ENCODE measurements at regions of chr15 and their contacts with region 1.

Region 1: GRCh38 chr15:99282121-99282520 is 30.8 kb downstream of the LRRC28 start:
- DNase-seq: no peak
- ATAC-seq: no peak
- H3K4me3 ChIP-seq: no peak overlapping the region
- H3K27ac ChIP-seq: peak overlapping the region in 1 of 4 donors; percentile 34
- H3K4me1 ChIP-seq: peaks cover 11 to 18% of the 10 kb centered on the region in 2 donors
- H3K27me3 ChIP-seq: no peaks in the 10 kb centered on the region
- CTCF ChIP-seq: no peak
- POLR2A ChIP-seq: no peak

Region 2: DNA sequence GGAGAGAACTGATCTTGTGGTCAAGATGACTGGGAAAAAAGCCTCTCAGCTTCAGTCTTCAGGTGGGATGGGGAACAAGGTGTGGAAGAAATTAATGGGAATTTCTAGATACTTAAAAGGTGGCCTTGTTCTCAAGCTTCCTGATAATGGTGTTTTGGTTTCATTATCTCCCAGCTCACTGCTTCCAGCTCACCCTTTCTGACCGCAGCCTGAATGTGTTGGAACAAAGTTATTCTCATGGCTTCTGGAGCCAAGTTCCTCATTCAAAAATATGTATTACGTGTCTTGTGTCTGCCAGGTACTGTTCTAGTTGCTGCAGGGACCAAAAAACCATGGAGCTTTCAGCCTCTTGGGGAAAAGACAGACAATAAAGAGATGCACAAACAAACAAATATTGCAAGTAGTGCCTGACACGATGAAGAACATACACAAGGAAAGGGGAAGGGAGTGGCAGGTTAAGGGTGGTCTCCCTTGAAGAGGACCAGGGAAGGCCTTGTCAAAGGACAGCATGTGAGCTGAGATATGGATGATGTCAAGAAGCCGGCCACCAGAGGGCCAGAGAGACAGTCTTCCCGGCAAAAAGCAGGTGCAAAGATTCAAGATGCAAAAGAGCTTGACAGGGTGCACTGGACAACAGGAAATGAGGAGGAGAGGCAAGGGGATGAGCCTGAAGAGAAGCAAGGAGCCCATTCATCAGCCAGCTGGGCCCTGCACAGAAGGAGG is 1286.1 kb before region 1 on chr15:
- in situ Hi-C with region 1: no loop called
- intact Hi-C with region 1: no loop called
- DNase-seq: no peak
- ATAC-seq: no peak
- H3K4me3 ChIP-seq: no peak overlapping the region
- H3K27ac ChIP-seq: no peak overlapping the region
- H3K4me1 ChIP-seq: peaks cover 4 to 12% of the 10 kb centered on the region in 2 donors
- H3K27me3 ChIP-seq: no peaks in the 10 kb centered on the region
- CTCF ChIP-seq: peak in 1 of 5 experiments; percentile 13
- POLR2A ChIP-seq: no peak

Region 3: DNA sequence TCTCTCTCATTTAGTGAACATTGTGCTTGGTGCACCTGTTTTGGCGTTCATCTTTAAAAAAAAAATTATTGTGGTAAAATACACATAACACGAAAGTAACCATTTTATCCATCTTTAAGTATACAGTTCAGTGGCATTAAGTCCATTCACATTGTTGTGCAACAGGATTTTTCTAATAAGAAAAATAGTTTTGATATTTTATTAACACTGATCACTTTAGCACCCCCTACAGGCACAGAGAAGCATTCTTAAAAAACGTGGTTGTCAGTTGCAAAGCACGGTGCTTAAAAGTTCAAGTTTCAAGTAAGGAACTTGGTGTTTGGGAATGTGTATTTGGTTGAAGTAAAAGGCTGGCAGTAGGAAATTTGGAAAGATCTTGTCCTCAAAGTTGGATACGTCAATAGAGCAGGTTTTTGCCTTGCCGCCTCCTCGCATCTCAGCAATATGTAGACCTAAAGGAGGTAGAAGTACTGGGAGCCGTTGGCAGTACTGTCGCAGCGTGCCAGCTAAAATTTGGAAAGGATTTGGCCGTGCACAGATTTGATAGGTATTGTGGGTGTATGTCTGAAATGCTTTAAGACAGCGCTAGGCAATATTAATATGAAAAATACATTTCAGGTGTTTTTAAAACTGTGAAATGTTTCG is 79.5 kb after region 1 on chr15:
- in situ Hi-C with region 1: no loop called
- intact Hi-C with region 1: loop called (anchors 1 kb)
- DNase-seq: no peak
- ATAC-seq: no peak
- H3K4me3 ChIP-seq: no peak overlapping the region
- H3K27ac ChIP-seq: no peak overlapping the region
- H3K4me1 ChIP-seq: no peaks in the 10 kb centered on the region
- H3K27me3 ChIP-seq: no peaks in the 10 kb centered on the region
- CTCF ChIP-seq: peak; percentile 9 to 44 (median 16)
- POLR2A ChIP-seq: no peak

Region 4: GRCh38 chr15:99385865-99386264 is 103.7 kb after region 1 on chr15:
- in situ Hi-C with region 1: loop called in 1 of 4 experiments (anchors 25 kb)
- intact Hi-C with region 1: loop called (anchors 5 kb)
- DNase-seq: peak in 1 of 2 donors; percentile 57
- ATAC-seq: peak; percentile 68 to 75
- H3K4me3 ChIP-seq: no peak overlapping the region
- H3K27ac ChIP-seq: no peak overlapping the region
- H3K4me1 ChIP-seq: peaks cover 12 to 23% of the 10 kb centered on the region in 2 donors
- H3K27me3 ChIP-seq: no peaks in the 10 kb centered on the region
- CTCF ChIP-seq: no peak
- POLR2A ChIP-seq: no peak

Region 5: DNA sequence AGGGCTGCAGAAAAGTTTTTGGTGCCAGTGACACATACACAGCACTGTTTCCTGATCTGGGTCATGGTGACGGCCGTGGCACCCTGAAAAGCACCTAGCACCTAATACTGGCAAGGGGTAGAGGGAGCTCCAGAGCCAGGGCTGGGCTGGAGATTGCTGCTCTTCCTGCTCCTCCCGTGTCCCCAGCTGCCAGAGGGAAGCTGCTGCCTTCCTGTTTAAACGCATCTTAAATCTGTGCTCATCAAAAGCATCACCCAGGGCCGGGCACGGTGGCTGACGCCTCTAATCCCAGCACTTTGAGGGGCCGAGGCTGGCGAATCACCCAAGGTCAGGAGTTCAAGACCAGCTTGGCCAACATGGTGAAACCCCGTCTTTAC is 127.0 kb after region 1 on chr15:
- in situ Hi-C with region 1: no loop called
- intact Hi-C with region 1: loop called (anchors 10 kb)
- DNase-seq: peak; percentile 54 to 67
- ATAC-seq: peak; percentile 74 to 91
- H3K4me3 ChIP-seq: no peak overlapping the region
- H3K27ac ChIP-seq: peak overlapping the region in 3 of 4 donors; percentile 4 to 37 (median 32)
- H3K4me1 ChIP-seq: peaks cover 13 to 15% of the 10 kb centered on the region in 2 donors
- H3K27me3 ChIP-seq: no peaks in the 10 kb centered on the region
- CTCF ChIP-seq: peak; percentile 36 to 76 (median 60)
- POLR2A ChIP-seq: no peak

Region 6: DNA sequence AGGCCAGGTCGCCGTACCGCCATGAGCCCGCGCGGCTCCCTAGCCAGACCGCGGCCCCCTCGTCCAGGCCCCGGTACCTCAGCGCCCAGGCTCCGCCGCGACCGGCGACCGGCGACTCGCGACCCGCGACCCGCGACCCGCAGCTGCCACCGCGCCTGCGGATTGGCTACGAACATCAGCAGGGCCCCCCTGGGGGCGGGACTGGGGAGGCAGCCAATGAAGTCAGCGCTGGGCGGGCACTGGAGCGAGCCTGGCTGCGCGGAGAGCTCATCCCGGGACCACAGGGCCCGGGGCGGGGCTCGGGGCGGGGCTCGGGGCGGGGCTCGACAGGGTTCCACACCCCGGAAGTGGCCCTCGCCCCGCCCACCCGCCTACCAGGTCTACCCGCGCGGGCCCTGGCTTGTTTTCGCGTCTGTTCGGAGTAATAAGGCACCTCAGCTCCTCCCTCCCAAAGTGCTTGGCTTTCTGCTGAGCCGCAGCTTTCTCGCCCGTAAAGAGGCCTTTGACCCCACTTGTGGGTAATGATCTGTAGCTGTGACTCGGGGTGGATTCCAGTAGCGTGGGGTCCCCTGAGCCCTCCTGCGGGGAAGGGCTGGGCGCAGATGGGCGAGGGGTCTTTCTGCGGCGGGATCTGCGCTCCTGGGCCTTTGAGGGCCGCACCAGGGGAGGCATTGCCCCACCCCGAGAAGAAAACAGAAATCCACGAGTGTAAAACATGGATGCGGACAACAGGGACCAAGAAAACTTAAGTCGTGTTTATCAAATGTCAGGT is 451.3 kb after region 1 on chr15 and contains the start of gene LYSMD4:
- in situ Hi-C with region 1: no loop called
- intact Hi-C with region 1: loop called (anchors 2 kb)
- DNase-seq: peak; percentile 97 to 98
- ATAC-seq: peak; percentile 87 to 91
- H3K4me3 ChIP-seq: peak within 1 kb of the TSS; percentile 76 to 98 (median 84)
- H3K27ac ChIP-seq: peak within 1 kb of the TSS; percentile 85 to 94 (median 90)
- H3K4me1 ChIP-seq: peaks cover 27 to 33% of the 10 kb centered on the region in 2 donors
- H3K27me3 ChIP-seq: no peaks in the 10 kb centered on the region
- CTCF ChIP-seq: peak in 1 of 5 experiments; percentile 6
- POLR2A ChIP-seq: peak; percentile 90 to 94
- total RNA-seq, gene LYSMD4: 5.1 to 15.8 (median 11.9) TPM

Region 7: GRCh38 chr15:99755692-99756409 is 473.7 kb after region 1 on chr15:
- in situ Hi-C with region 1: loop called in 3 of 4 experiments (anchors 10 kb)
- intact Hi-C with region 1: no loop called
- DNase-seq: no peak
- ATAC-seq: peak; percentile 91 to 98
- H3K4me3 ChIP-seq: no peak overlapping the region
- H3K27ac ChIP-seq: no peak overlapping the region
- H3K4me1 ChIP-seq: no peaks in the 10 kb centered on the region
- H3K27me3 ChIP-seq: no peaks in the 10 kb centered on the region
- CTCF ChIP-seq: peak; percentile 59 to 89 (median 77)
- POLR2A ChIP-seq: no peak